ENCODE measurements at regions of chr20 and their contacts with region 1.

Region 1: GRCh38 chr20:9359561-9360308 is 154.7 kb upstream of the LAMP5 start:
- DNase-seq: peak; percentile 47 to 81 (median 55)
- ATAC-seq: peak; percentile 89
- H3K4me3 ChIP-seq: no peak overlapping the region
- H3K4me1 ChIP-seq: no peaks in the 10 kb centered on the region
- CTCF ChIP-seq: no peak

Region 2: GRCh38 chr20:8782804-8783203 is 576.9 kb before region 1 on chr20:
- intact Hi-C with region 1: loop called in 1 of 2 experiments (anchors 10 kb)
- DNase-seq: no peak
- ATAC-seq: no peak
- H3K4me3 ChIP-seq: no peak overlapping the region
- H3K4me1 ChIP-seq: peaks cover 17% of the 10 kb centered on the region
- CTCF ChIP-seq: no peak

Region 3: GRCh38 chr20:8853805-8854338 is 505.9 kb before region 1 on chr20:
- intact Hi-C with region 1: loop called in 1 of 2 experiments (anchors 10 kb)
- DNase-seq: peak in 1 of 3 donors; percentile 42
- ATAC-seq: peak; percentile 95
- H3K4me3 ChIP-seq: no peak overlapping the region
- H3K4me1 ChIP-seq: peaks cover 6% of the 10 kb centered on the region
- CTCF ChIP-seq: peak; percentile 56

Region 4: DNA sequence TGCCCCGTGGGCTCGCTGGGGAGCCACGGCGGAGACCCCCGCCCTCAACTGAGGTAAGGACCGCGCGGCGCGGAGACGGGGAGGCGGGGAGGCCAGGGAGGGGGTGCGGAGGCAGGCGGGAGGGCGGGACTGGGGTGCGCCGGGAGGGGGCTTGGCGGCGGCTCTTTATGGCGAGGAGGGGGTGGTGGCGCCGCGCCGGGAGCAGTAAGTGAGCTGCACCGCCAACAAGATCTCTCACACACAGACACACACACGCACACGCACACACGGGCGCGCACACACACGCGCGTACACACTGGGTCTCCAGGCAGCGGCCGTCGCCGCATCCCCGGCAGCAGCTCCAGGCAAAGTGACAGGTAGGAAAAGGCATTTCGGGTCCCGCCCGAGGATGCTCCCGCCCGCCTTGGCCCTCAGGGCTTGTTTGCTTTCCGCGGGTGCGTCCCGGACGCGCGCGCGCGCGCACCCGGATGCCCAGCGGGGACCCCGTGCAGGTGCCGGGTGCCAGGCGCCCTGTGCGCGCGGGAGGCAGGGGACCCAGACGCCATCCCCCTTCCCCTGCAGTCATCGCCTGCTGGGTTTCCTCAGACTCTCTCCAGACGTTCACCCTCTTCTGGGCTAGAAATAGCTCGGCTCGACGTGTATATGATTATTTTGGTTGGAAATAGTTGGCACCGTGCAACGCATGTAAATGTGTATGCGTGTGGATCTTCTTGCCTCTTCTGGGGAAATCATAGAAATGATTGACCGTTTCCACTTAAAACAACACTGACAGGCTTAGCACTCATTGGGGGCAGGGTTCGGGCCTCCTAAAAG is 290.7 kb before region 1 on chr20 and contains the start of gene PLCB4:
- intact Hi-C with region 1: loop called in 1 of 2 experiments (anchors 10 kb)
- DNase-seq: peak; percentile 77 to 83 (median 78)
- ATAC-seq: peak; percentile 79
- H3K4me3 ChIP-seq: peak within 1 kb of the TSS; percentile 45
- H3K4me1 ChIP-seq: no peaks in the 10 kb centered on the region
- CTCF ChIP-seq: no peak
- total RNA-seq, gene PLCB4: 37.8 to 55.0 (median 51.2) TPM

Measured in mucosa of descending colon (tissue), 3 donors.